ENCODE measurements at regions of chr1 and their contacts with region 1.

Region 1: GRCh38 chr1:41728403-41729202 is 190.1 kb downstream of the HIVEP3 start:
- DNase-seq: no peak
- ATAC-seq: no peak
- H3K4me3 ChIP-seq: no peak overlapping the region
- H3K27ac ChIP-seq: peak overlapping the region in 1 of 12 donors; percentile 80
- H3K4me1 ChIP-seq: peaks cover 0 to 84% (median 44%) of the 10 kb centered on the region in 12 donors
- H3K27me3 ChIP-seq: no peaks in the 10 kb centered on the region
- CTCF ChIP-seq: no peak
- POLR2A ChIP-seq: no peak

Region 2: GRCh38 chr1:41662061-41662764 is 66.4 kb before region 1 on chr1:
- intact Hi-C with region 1: loop called in 2 of 10 experiments (anchors 5 kb)
- DNase-seq: peak; percentile 76 to 87 (median 83)
- ATAC-seq: peak; percentile 36 to 81 (median 80)
- H3K4me3 ChIP-seq: peak overlapping the region; percentile 47 to 94 (median 70)
- H3K27ac ChIP-seq: peak overlapping the region; percentile 25 to 97 (median 92)
- H3K4me1 ChIP-seq: peaks cover 0 to 66% (median 18%) of the 10 kb centered on the region in 12 donors
- H3K27me3 ChIP-seq: no peaks in the 10 kb centered on the region
- CTCF ChIP-seq: no peak
- POLR2A ChIP-seq: peak; percentile 8 to 78

Region 3: DNA sequence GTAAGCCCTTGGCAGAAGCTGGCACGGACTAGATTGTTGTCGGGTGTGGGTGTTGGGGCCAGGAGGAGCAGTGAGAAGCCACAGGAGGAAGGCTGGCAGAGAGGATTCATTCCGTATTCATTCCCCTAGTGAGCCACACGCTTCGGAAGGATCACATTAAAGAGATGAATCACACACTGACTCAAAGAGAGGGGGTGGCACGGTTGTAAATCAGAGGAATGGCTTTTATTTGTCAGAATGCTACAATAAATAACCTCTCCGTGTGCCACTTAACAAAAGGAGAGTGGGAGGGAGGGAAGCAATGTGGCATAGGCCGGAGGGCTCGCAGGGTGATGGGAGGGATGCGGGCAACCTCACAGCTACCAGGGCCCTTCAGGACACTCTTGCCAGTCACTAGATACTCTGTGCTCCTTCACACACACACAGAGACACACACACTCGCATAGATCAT is 54.6 kb after region 1 on chr1:
- intact Hi-C with region 1: loop called in 1 of 10 experiments (anchors 10 kb)
- DNase-seq: no peak
- ATAC-seq: peak in 1 of 4 donors; percentile 22
- H3K4me3 ChIP-seq: no peak overlapping the region
- H3K27ac ChIP-seq: no peak overlapping the region
- H3K4me1 ChIP-seq: peaks cover 0 to 15% (median 0%) of the 10 kb centered on the region in 12 donors
- H3K27me3 ChIP-seq: no peaks in the 10 kb centered on the region
- CTCF ChIP-seq: no peak
- POLR2A ChIP-seq: no peak